GM12878 (cell line): ENCODE measurements at regions of chr16 and their contacts with region 1.

Region 1: DNA sequence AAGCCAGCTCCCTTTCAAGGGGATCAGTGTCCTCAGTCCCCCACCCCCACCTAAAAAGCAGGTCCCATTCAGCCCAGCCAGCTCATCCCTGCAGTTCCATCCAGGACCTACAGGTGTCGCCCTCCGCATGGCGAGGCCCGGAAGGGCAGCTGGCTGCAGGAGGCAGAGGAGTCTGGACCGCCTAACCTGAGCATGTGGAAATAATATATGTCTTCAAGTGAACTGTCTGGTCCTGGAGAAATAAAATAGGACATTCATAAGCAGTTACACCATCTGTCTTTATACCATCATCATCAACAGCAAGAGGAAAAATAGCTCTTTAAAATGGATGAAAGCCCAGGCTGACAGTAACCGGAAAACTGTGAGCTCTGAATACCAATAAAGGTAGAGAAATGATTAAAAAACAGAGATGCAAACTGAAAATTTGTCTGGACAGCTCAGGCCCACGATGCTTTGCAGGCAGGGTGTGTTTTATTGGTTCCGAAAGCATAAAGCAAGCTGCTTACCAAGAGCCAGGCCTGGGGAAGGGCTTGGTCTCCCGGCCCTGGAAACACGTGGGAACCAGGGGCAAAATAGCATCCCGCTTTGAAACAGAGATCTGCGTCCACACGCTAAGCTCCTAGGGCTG is 215.2 kb downstream of the ZFHX3 start:
- DNase-seq: no peak
- ATAC-seq: peak; percentile 96
- H3K4me3 ChIP-seq: no peak overlapping the region
- H3K27ac ChIP-seq: no peak overlapping the region
- H3K4me1 ChIP-seq: peaks cover 8% of the 10 kb centered on the region
- H3K27me3 ChIP-seq: no peaks in the 10 kb centered on the region
- CTCF ChIP-seq: peak; percentile 95 to 100 (median 99); a peak in 5 of 6 replicates
- EP300 ChIP-seq: no peak
- POLR2A ChIP-seq: no peak
- RAD21 ChIP-seq: peak; percentile 96

Region 2: GRCh38 chr16:72787514-72788268 is 45.0 kb before region 1 on chr16:
- CTCF ChIA-PET with region 1: interaction called, 10 read pairs
- POLR2A ChIA-PET with region 1: no interaction called
- RAD21 ChIA-PET with region 1: interaction called, 5 read pairs
- SMC1A ChIA-PET with region 1: interaction called, 5 read pairs
- in situ Hi-C with region 1: no loop called
- intact Hi-C with region 1: no loop called
- DNase-seq: peak; percentile 9
- ATAC-seq: peak; percentile 92
- H3K4me3 ChIP-seq: peak overlapping the region; percentile 41; the same call in 1 of the 2 replicates
- H3K27ac ChIP-seq: peak overlapping the region; percentile 31; the same call in 1 of the 2 replicates
- H3K4me1 ChIP-seq: peaks cover 9% of the 10 kb centered on the region
- H3K27me3 ChIP-seq: no peaks in the 10 kb centered on the region
- CTCF ChIP-seq: no peak
- EP300 ChIP-seq: no peak
- POLR2A ChIP-seq: peak; percentile 69
- RAD21 ChIP-seq: no peak

Region 3: DNA sequence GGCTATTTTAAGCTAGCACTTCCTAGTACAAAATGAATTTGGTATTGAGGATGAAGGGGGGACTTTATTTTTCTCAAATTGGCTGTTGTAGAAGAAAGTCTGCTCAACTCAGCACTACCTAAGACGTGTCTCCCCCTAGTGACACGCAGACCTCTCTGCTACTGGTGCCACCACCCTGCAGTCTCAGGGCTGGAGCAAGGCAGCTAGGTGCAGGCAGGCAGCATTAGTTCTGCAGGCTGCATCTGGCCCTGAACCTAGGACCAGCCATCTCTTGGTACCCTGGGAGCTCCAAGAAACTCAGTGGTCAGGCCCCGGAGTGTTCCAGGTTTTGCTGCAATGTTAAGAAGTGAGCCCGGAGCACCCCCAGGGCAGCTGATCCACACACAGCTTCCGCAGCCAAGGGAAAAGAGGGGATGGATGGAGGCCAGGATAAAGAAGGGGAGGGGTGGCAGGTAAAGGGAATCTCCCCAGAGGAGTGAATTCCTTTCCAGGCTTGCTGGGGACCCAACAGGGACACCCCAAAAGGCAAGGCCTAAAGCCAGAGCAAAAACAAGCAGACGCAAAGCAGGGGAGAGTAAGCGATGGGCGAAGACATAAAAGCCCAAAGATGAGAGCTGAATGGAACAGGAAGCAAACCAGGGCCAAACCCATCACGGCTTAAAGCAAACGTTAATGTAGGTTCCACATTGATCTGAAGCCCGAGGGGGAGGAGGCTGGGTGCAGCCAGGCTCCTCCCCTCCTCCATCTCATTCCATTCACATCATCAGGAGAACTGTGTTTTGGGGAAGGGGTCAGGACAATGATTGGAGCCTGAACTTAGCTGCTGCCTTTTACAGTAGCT is 14.7 kb after region 1 on chr16:
- CTCF ChIA-PET with region 1: interaction called, 69 read pairs
- POLR2A ChIA-PET with region 1: no interaction called
- RAD21 ChIA-PET with region 1: interaction called, 7 read pairs
- SMC1A ChIA-PET with region 1: interaction called, 5 read pairs
- in situ Hi-C with region 1: no loop called
- intact Hi-C with region 1: no loop called
- DNase-seq: no peak
- ATAC-seq: peak; percentile 86
- H3K4me3 ChIP-seq: no peak overlapping the region
- H3K27ac ChIP-seq: no peak overlapping the region
- H3K4me1 ChIP-seq: peaks cover 15% of the 10 kb centered on the region
- H3K27me3 ChIP-seq: no peaks in the 10 kb centered on the region
- CTCF ChIP-seq: peak; percentile 52 to 59 (median 55)
- EP300 ChIP-seq: no peak
- POLR2A ChIP-seq: no peak
- RAD21 ChIP-seq: peak; percentile 58

Region 4: DNA sequence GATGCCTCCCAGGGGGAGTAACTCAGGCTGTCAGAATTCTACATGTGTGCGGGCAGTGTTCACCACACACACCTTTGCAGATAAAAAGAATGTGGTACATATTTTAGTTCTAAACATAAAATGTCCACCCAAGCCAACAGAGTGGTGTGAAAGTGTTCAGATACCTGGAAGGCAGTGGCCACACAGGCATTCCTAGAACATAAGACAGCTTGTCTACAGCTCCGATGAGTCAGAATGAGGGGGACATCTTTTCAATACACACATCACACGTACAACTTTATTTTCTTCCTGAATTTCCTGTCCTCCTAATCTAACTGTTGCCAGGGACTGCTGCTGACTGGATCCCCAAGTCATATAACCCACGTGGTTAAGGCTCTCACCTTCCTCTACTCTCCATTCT is 72.8 kb after region 1 on chr16:
- CTCF ChIA-PET with region 1: no interaction called
- POLR2A ChIA-PET with region 1: no interaction called
- RAD21 ChIA-PET with region 1: no interaction called
- SMC1A ChIA-PET with region 1: no interaction called
- in situ Hi-C with region 1: no loop called
- intact Hi-C with region 1: no loop called
- DNase-seq: no peak
- ATAC-seq: no peak
- H3K4me3 ChIP-seq: no peak overlapping the region
- H3K27ac ChIP-seq: no peak overlapping the region
- H3K4me1 ChIP-seq: no peaks in the 10 kb centered on the region
- H3K27me3 ChIP-seq: no peaks in the 10 kb centered on the region
- CTCF ChIP-seq: no peak
- EP300 ChIP-seq: no peak
- POLR2A ChIP-seq: no peak
- RAD21 ChIP-seq: no peak

Region 5: GRCh38 chr16:73036074-73036826 is 203.5 kb after region 1 on chr16:
- CTCF ChIA-PET with region 1: interaction called, 57 read pairs
- POLR2A ChIA-PET with region 1: no interaction called
- RAD21 ChIA-PET with region 1: interaction called, 10 read pairs
- SMC1A ChIA-PET with region 1: interaction called, 10 read pairs
- in situ Hi-C with region 1: no loop called
- intact Hi-C with region 1: no loop called
- DNase-seq: peak; percentile 75
- ATAC-seq: peak; percentile 80
- H3K4me3 ChIP-seq: peak overlapping the region; percentile 66
- H3K27ac ChIP-seq: peak overlapping the region; percentile 89
- H3K4me1 ChIP-seq: peaks cover 75% of the 10 kb centered on the region
- H3K27me3 ChIP-seq: no peaks in the 10 kb centered on the region
- CTCF ChIP-seq: peak in 2 of 3 experiments; percentile 4 to 9; a peak in 1 of 6 replicates
- EP300 ChIP-seq: peak in 1 of 2 experiments; percentile 18; a peak in 1 of 4 replicates
- POLR2A ChIP-seq: peak; percentile 75
- RAD21 ChIP-seq: 0 out of 2 replicates have a peak, but pooled peaks have one; percentile 14

Region 6: DNA sequence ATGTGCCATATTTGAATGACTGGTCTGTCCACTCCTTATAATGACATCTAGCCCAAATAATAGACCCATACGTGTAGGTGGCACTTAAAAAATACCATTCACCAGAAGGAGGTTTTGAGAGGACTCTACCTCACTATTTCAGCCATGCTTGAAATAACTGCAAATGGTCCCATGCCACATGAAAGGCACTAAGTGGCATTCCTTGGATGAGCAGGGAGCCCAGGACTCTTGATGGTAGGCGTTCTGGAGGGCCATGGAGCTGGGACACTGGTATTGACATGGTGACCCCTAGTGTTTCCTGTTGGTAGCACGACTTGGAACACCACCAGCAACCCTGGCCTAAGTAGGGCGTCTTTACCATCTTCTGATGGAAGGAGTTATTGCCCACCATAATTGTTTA is 363.9 kb after region 1 on chr16:
- CTCF ChIA-PET with region 1: interaction called, 45 read pairs
- POLR2A ChIA-PET with region 1: no interaction called
- RAD21 ChIA-PET with region 1: interaction called, 14 read pairs
- SMC1A ChIA-PET with region 1: interaction called, 22 read pairs
- in situ Hi-C with region 1: no loop called
- intact Hi-C with region 1: loop called (anchors 1 kb)
- DNase-seq: peak; percentile 24
- ATAC-seq: peak; percentile 98
- H3K4me3 ChIP-seq: no peak overlapping the region
- H3K27ac ChIP-seq: no peak overlapping the region
- H3K4me1 ChIP-seq: no peaks in the 10 kb centered on the region
- H3K27me3 ChIP-seq: no peaks in the 10 kb centered on the region
- CTCF ChIP-seq: peak; percentile 63 to 82 (median 78)
- EP300 ChIP-seq: no peak
- POLR2A ChIP-seq: no peak
- RAD21 ChIP-seq: peak; percentile 78

Region 7: GRCh38 chr16:73240928-73241327 is 408.2 kb after region 1 on chr16:
- CTCF ChIA-PET with region 1: no interaction called
- POLR2A ChIA-PET with region 1: no interaction called
- RAD21 ChIA-PET with region 1: no interaction called
- SMC1A ChIA-PET with region 1: no interaction called
- in situ Hi-C with region 1: no loop called
- intact Hi-C with region 1: no loop called
- DNase-seq: no peak
- ATAC-seq: no peak
- H3K4me3 ChIP-seq: no peak overlapping the region
- H3K27ac ChIP-seq: no peak overlapping the region
- H3K4me1 ChIP-seq: no peaks in the 10 kb centered on the region
- H3K27me3 ChIP-seq: no peaks in the 10 kb centered on the region
- CTCF ChIP-seq: no peak
- EP300 ChIP-seq: no peak
- POLR2A ChIP-seq: no peak
- RAD21 ChIP-seq: no peak